Activated B cell treated with CpG ODN at 0.5 μM for 24 hours (primary cell): ENCODE measurements at regions of chr9 and their contacts with region 1.

Region 1: DNA sequence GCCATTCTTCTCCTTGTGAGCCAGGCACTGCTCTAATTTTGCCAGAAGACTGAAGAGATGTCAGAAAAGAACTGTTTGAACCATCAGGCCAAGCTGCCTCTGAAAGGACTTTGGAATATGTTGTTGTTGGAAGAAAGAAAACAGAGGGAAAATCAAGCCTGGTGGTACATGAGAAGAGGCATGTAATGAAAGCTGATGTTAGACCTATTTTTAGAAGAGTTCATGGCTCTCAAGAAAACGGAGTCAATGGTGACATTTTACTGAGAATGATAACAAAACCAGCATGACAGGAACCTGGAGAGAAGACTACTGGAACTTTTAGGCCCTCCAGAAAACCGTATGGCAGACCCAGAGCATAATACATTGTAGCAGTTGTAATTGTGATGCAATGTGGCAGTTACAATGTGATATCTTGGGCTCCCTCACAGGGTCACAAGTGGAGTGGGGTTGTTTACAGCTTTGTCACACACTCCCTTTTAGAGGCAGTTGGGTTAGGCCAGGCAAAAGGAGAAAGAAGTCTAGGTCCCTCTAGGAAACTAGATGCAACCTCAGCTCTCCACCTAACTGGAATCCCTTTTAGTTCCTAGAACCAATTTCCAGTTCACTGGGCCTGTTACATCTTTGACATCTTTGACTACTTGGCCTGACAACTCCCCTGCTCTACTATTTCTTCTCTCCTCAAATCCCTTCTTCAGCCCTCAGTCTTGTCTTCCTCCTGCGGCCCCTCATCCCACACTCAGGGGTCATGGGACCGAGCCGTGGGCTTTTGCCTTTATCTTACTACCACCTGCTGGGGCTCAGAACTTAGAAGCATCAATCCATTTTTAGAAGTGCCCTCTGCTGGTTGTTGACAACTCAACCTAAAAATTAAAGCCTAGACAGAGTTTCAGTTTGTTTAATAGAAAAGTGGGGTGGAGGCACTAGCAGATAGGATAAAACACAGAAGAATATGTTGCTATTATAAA is 61.2 kb upstream of the JAK2 start:
- DNase-seq: no peak
- ATAC-seq: peak; percentile 52
- H3K4me3 Mint-ChIP-seq: no peak overlapping the region
- H3K27ac Mint-ChIP-seq: no peak overlapping the region
- H3K4me1 Mint-ChIP-seq: peaks cover 11% of the 10 kb centered on the region
- H3K27me3 Mint-ChIP-seq: no peaks in the 10 kb centered on the region
- CTCF ChIP-seq: no peak

Region 2: GRCh38 chr9:4604678-4605095 is 319.2 kb before region 1 on chr9:
- CTCF ChIA-PET with region 1: interaction called, 3 read pairs
- POLR2A ChIA-PET with region 1: no interaction called
- intact Hi-C with region 1: loop called (anchors 10 kb)
- DNase-seq: no peak
- ATAC-seq: peak; percentile 70
- H3K4me3 Mint-ChIP-seq: no peak overlapping the region
- H3K27ac Mint-ChIP-seq: no peak overlapping the region
- H3K4me1 Mint-ChIP-seq: peaks cover 4% of the 10 kb centered on the region
- H3K27me3 Mint-ChIP-seq: peaks cover 4% of the 10 kb centered on the region
- CTCF ChIP-seq: no peak